Activated naive CD4-positive, alpha-beta T cell treated with anti-CD3 and anti-CD28 coated beads for 36 hours (primary cell): ENCODE measurements at regions of chr6 and their contacts with region 1.

Region 1: GRCh38 chr6:155418017-155418761 is 37.5 kb downstream of the NOX3 start:
- DNase-seq: peak; percentile 87
- H3K4me3 Mint-ChIP-seq: peak overlapping the region; percentile 55
- H3K27ac Mint-ChIP-seq: peak overlapping the region; percentile 96
- H3K4me1 Mint-ChIP-seq: peaks cover 43% of the 10 kb centered on the region
- H3K27me3 Mint-ChIP-seq: no peaks in the 10 kb centered on the region

Region 2: GRCh38 chr6:154733012-154733625 is 685.1 kb before region 1 on chr6 and contains the start of gene SCAF8:
- CTCF ChIA-PET with region 1: no interaction called
- intact Hi-C with region 1: loop called (anchors 2 kb)
- DNase-seq: peak; percentile 83
- H3K4me3 Mint-ChIP-seq: peak within 1 kb of the TSS; percentile 85
- H3K27ac Mint-ChIP-seq: peak within 1 kb of the TSS; percentile 93
- H3K4me1 Mint-ChIP-seq: peaks cover 44% of the 10 kb centered on the region
- H3K27me3 Mint-ChIP-seq: no peaks in the 10 kb centered on the region
- total RNA-seq, gene SCAF8: 27.2 to 28.0 TPM

Region 3: GRCh38 chr6:155333414-155333813 is 84.8 kb before region 1 on chr6:
- CTCF ChIA-PET with region 1: interaction called, 6 read pairs
- intact Hi-C with region 1: loop called (anchors 1 kb)
- DNase-seq: peak; percentile 42
- H3K4me3 Mint-ChIP-seq: peak overlapping the region; percentile 38
- H3K27ac Mint-ChIP-seq: peak overlapping the region; percentile 86
- H3K4me1 Mint-ChIP-seq: peaks cover 58% of the 10 kb centered on the region
- H3K27me3 Mint-ChIP-seq: no peaks in the 10 kb centered on the region

Region 4: DNA sequence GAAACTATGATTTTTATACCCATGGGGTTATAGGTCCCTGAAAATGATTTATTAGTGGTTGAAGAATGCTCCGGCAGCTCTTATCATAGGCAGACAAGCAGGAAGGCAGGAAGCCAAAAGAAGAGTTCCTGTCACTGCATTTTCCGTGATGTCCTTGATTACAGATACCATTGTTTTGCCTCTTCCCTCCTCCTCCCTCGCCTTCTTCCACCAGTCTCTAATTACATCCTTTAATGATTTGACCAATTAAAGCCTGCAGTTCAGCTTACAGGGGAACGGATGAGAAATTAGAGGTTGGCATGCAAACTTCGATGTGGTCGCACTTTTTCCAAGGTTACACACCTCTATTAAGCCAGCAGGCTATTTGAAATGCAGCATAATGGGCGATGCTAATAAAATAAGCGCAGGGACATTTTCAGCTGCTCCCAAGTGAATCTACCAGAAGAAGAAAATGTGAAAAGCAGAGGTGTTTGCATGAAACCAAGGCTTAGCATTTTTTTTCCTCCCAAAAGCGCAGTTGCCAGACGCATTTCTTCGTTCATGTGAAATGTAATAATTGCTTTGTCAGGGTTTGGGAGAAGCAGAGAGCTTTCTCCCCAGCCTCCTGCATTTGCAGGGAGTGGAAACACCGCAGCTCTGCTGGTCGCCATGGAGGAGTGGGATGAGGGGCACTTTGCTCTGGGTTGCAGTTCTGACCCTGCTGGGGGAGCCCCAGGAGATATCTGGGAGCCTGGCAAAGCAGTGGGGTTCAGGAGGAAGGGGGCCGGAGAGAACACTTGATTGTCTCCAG is 31.5 kb after region 1 on chr6:
- CTCF ChIA-PET with region 1: no interaction called
- intact Hi-C with region 1: no loop called
- DNase-seq: no peak
- H3K4me3 Mint-ChIP-seq: no peak overlapping the region
- H3K27ac Mint-ChIP-seq: no peak overlapping the region
- H3K4me1 Mint-ChIP-seq: peaks cover 21% of the 10 kb centered on the region
- H3K27me3 Mint-ChIP-seq: no peaks in the 10 kb centered on the region

Region 5: DNA sequence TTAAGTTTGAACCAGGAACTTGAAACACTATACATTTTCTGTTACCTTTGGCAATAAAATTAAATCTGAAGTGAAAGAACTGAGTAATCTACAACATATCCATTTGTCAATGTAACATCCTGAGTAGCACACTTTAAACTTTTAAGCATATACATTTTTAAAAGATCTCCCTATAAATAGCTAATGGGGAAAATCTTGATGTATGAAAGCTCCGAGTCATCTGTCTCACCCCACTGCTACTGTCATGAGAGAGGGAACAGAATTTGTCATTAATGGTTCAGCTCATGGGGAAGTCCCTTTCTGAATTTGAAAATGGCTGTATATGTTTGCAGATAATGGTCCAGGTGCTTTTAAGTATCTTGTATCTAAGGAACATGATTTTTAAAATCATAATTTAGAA is 92.7 kb after region 1 on chr6:
- CTCF ChIA-PET with region 1: no interaction called
- intact Hi-C with region 1: loop called (anchors 1 kb)
- DNase-seq: peak; percentile 40
- H3K4me3 Mint-ChIP-seq: no peak overlapping the region
- H3K27ac Mint-ChIP-seq: peak overlapping the region; percentile 73
- H3K4me1 Mint-ChIP-seq: peaks cover 23% of the 10 kb centered on the region
- H3K27me3 Mint-ChIP-seq: no peaks in the 10 kb centered on the region

Region 6: GRCh38 chr6:156174031-156174890 is 756.1 kb after region 1 on chr6:
- CTCF ChIA-PET with region 1: no interaction called
- intact Hi-C with region 1: loop called (anchors 1 kb)
- DNase-seq: peak; percentile 72
- H3K4me3 Mint-ChIP-seq: no peak overlapping the region
- H3K27ac Mint-ChIP-seq: peak overlapping the region; percentile 25
- H3K4me1 Mint-ChIP-seq: peaks cover 18% of the 10 kb centered on the region
- H3K27me3 Mint-ChIP-seq: no peaks in the 10 kb centered on the region